ENCODE measurements at regions of chr17 and their contacts with region 1.

Region 1: DNA sequence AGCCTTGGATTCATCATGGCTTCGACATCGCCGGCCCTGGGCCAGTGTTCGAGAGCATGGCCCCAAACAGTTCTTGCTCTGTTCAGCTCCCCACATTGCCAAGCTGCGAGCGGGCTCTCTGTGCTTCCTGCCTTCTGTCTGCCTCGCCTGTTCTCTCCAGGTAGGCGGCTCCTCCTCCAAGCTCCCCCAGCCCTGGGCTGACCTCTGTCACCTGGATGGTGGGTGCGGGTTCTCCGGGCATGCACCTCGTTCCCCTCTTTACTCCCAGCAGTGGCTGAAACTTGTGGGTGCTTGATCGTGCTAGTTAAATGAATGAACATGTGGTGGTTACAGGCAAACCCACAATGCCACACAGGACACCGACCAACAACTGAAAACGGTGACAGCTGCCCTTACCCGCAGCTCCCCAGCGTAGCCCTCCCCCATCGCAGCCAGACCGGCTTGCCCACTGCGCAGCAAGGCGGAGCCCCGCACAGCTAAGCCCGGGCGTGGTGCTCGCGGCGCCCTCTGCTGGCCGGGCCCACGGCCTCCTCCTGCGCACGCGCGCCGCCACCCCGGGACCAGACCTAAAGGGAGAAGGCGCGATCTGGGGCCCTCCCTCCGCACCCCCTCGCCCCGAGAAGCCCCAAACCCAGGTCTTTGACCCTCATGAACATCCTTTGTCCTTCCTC is 23.0 kb upstream of the EIF1 start:
- DNase-seq: peak; percentile 66
- ATAC-seq: peak; percentile 84
- H3K4me3 ChIP-seq: peak overlapping the region; percentile 44 to 57
- H3K27ac ChIP-seq: peak overlapping the region; percentile 69
- H3K4me1 ChIP-seq: peaks cover 14 to 61% of the 10 kb centered on the region in 2 experiments
- H3K27me3 ChIP-seq: no peaks in the 10 kb centered on the region
- CTCF ChIP-seq: peak; percentile 70 to 94 (median 92)
- POLR2A ChIP-seq: peak; percentile 30
- RAD21 ChIP-seq: peak; percentile 42; the same call in 1 of the 2 replicates

Region 2: GRCh38 chr17:40615295-40615988 is 1050.3 kb before region 1 on chr17:
- CTCF ChIA-PET with region 1: interaction called, 23 read pairs
- POLR2A ChIA-PET with region 1: interaction called, 3 read pairs
- RAD21 ChIA-PET with region 1: interaction called in 1 of 2 experiments, 4 read pairs
- intact Hi-C with region 1: loop called (anchors 2 kb)
- DNase-seq: peak; percentile 69
- ATAC-seq: peak; percentile 90
- H3K4me3 ChIP-seq: no peak overlapping the region
- H3K27ac ChIP-seq: no peak overlapping the region
- H3K4me1 ChIP-seq: peaks cover 1 to 17% of the 10 kb centered on the region in 2 experiments; a peak in 3 of 4 replicates
- H3K27me3 ChIP-seq: no peaks in the 10 kb centered on the region
- CTCF ChIP-seq: peak; percentile 72 to 95 (median 75)
- POLR2A ChIP-seq: no peak
- RAD21 ChIP-seq: peak; percentile 87

Region 3: GRCh38 chr17:40854159-40854814 is 811.4 kb before region 1 on chr17:
- CTCF ChIA-PET with region 1: interaction called, 23 read pairs
- POLR2A ChIA-PET with region 1: no interaction called
- RAD21 ChIA-PET with region 1: no interaction called
- intact Hi-C with region 1: loop called (anchors 1 kb)
- DNase-seq: peak; percentile 71
- ATAC-seq: peak; percentile 71
- H3K4me3 ChIP-seq: no peak overlapping the region
- H3K27ac ChIP-seq: peak overlapping the region; percentile 25; the same call in 1 of the 2 replicates
- H3K4me1 ChIP-seq: peaks cover 11 to 50% of the 10 kb centered on the region in 2 experiments
- H3K27me3 ChIP-seq: no peaks in the 10 kb centered on the region
- CTCF ChIP-seq: no peak
- POLR2A ChIP-seq: no peak
- RAD21 ChIP-seq: 0 out of 2 replicates have a peak, but pooled peaks have one; percentile 17

Region 4: GRCh38 chr17:41521574-41522261 is 144.0 kb before region 1 on chr17:
- CTCF ChIA-PET with region 1: interaction called, 9 read pairs
- POLR2A ChIA-PET with region 1: interaction called, 10 read pairs
- RAD21 ChIA-PET with region 1: no interaction called
- intact Hi-C with region 1: no loop called
- DNase-seq: peak; percentile 97
- ATAC-seq: peak; percentile 65
- H3K4me3 ChIP-seq: peak overlapping the region; percentile 36 to 47
- H3K27ac ChIP-seq: peak overlapping the region; percentile 99
- H3K4me1 ChIP-seq: peaks cover 74 to 91% of the 10 kb centered on the region in 2 experiments
- H3K27me3 ChIP-seq: no peaks in the 10 kb centered on the region
- CTCF ChIP-seq: no peak; a peak in 1 of 6 replicates
- POLR2A ChIP-seq: no peak
- RAD21 ChIP-seq: no peak

Region 5: DNA sequence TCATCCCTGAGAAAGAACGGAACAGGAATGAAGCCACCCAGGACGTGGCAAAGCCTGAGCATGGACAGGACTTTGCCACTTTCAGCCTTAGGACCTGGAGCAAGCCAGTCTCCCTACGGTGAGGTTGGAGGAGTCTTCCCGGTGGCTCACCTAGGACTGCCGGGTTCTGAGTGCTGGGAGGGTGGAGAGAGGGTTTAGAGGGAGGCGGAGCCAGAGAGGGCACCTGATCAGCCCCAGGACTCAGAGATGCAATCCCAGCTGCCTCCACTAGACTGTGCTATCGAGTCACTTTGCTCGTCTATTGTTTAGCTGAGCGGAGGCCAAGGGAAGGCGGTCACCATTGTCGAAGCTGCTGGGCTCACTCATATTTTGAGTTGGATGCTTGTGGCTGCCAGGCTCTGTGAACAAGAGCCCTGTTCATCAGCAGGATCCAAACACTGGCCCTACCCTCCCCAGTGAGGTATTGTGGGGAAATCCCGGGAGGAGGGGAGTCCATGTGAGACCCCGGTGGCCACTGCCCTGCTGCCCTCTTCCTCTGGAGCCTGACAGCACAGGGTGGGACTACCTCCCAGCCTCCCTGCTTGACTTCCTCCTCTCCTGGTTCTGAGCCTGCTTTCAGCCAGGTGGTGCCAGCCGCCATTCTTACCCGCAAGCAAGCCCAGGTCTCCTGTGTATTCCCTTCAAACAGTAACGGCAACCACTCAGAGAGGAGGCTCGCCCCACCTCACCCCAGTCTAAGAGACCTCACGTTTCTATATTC is 86.0 kb before region 1 on chr17:
- CTCF ChIA-PET with region 1: interaction called, 15 read pairs
- POLR2A ChIA-PET with region 1: no interaction called
- RAD21 ChIA-PET with region 1: interaction called in 1 of 2 experiments, 7 read pairs
- intact Hi-C with region 1: loop called (anchors 1 kb)
- DNase-seq: peak; percentile 82
- ATAC-seq: peak; percentile 95
- H3K4me3 ChIP-seq: peak overlapping the region; percentile 17 to 47
- H3K27ac ChIP-seq: peak overlapping the region; percentile 37
- H3K4me1 ChIP-seq: peaks cover 22 to 49% of the 10 kb centered on the region in 2 experiments
- H3K27me3 ChIP-seq: no peaks in the 10 kb centered on the region
- CTCF ChIP-seq: peak; percentile 84 to 94 (median 86)
- POLR2A ChIP-seq: peak; percentile 48
- RAD21 ChIP-seq: peak; percentile 89

Region 6: DNA sequence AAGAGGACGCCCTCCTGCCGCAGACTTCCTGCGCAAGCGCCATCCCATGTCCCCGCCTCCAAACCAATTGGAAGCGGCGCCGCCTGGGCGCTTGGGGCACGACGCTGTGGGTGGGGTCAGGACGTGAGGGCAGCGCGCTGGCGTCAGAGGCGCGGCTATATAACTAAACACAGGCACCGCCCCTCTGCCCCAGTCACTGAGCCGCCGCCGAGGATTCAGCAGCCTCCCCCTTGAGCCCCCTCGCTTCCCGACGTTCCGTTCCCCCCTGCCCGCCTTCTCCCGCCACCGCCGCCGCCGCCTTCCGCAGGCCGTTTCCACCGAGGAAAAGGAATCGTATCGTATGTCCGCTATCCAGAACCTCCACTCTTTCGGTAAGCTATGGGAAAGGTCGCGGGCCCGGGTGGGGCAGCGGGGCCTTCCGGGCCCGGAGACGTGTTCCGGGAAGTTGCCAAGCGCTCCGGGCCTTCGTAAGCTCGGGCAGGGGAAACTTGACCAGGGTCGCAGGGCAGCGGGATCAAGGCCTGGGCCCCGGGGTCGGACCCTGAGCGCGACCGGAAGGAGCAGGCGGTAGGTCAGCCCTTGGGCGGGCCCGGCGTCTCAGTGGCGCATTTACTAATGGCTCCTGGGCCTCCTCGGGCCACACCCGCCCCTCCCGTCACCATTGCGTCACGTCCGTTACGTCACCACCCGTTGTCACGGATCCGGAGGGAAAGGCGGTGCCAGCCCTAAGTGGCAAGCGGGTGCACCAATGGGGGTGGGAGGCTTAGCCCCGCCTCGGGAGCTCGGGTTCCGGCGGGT is 23.2 kb after region 1 on chr17 and contains the start of gene EIF1:
- CTCF ChIA-PET with region 1: interaction called, 23 read pairs
- POLR2A ChIA-PET with region 1: interaction called, 28 read pairs
- RAD21 ChIA-PET with region 1: interaction called in 1 of 2 experiments, 4 read pairs
- intact Hi-C with region 1: no loop called
- DNase-seq: peak; percentile 99
- ATAC-seq: peak; percentile 76
- H3K4me3 ChIP-seq: peak within 1 kb of the TSS; percentile 81 to 93
- H3K27ac ChIP-seq: peak within 1 kb of the TSS; percentile 97
- H3K4me1 ChIP-seq: peaks cover 10 to 17% of the 10 kb centered on the region in 2 experiments
- H3K27me3 ChIP-seq: no peaks in the 10 kb centered on the region
- CTCF ChIP-seq: no peak
- POLR2A ChIP-seq: peak; percentile 93
- RAD21 ChIP-seq: no peak
- total RNA-seq, gene EIF1: 1,082 TPM

Region 7: DNA sequence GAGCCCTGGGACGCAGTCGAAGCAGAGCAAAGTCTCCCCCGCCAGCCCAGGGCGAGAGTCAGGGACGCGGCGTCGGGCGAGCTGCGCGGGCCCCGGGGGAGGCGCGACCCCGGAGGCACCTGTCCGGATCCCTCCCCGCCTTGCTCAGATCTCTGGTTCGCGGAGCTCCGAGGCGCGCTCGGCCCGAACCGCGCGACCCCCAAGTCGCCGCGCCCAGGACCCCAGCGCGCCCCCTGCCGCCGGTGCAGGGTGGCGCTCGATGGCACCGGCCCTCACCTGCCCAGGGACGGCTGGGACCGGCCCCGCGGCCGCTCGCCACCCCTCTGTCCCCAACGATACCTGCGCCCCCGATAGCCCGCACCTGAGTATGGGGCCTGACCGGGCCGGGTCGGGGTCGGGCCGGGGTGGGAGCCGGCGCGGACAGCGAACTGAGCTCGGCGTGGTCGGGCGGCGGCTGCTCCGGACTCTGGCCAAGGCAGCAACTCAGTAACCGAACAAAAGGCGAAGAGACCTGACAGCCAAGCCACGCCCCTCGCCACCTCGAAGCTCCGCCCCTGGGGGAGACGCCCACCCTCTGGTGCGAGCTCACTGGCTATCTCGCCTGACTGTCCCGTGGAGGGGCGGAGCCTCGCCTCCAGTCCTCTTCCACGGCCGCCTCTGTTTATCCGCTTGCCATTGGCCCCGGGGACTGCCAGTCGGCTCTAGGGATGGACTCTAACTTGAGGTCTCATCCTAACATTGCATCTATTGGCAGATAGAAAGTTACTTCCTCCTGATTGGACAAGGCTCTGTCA is 120.7 kb after region 1 on chr17 and contains the start of gene JUP:
- CTCF ChIA-PET with region 1: no interaction called
- POLR2A ChIA-PET with region 1: no interaction called
- RAD21 ChIA-PET with region 1: no interaction called
- intact Hi-C with region 1: no loop called
- DNase-seq: peak; percentile 99
- ATAC-seq: peak; percentile 94
- H3K4me3 ChIP-seq: peak within 1 kb of the TSS; percentile 78 to 80
- H3K27ac ChIP-seq: peak within 1 kb of the TSS; percentile 95
- H3K4me1 ChIP-seq: peaks cover 35 to 60% of the 10 kb centered on the region in 2 experiments
- H3K27me3 ChIP-seq: no peaks in the 10 kb centered on the region
- CTCF ChIP-seq: peak in 2 of 3 experiments; percentile 71 to 75; a peak in 5 of 6 replicates
- POLR2A ChIP-seq: peak; percentile 45
- RAD21 ChIP-seq: peak; percentile 46; the same call in 1 of the 2 replicates
- total RNA-seq, gene JUP: 224 TPM

Measured in HCT116 (cell line).